A673 (cell line): ENCODE measurements at regions of chr16 and their contacts with region 1.

Region 1: GRCh38 chr16:14278749-14279148 is 207.6 kb downstream of the MRTFB start:
- DNase-seq: no peak
- H3K4me3 ChIP-seq: no peak overlapping the region
- H3K27ac ChIP-seq: no peak overlapping the region
- H3K4me1 ChIP-seq: peaks cover 10% of the 10 kb centered on the region
- H3K27me3 ChIP-seq: no peaks in the 10 kb centered on the region
- CTCF ChIP-seq: no peak

Region 2: GRCh38 chr16:14329727-14330350 is 51.1 kb after region 1 on chr16:
- CTCF ChIA-PET with region 1: no interaction called
- POLR2A ChIA-PET with region 1: interaction called, 11 read pairs
- intact Hi-C with region 1: no loop called
- DNase-seq: no peak
- H3K4me3 ChIP-seq: no peak overlapping the region
- H3K27ac ChIP-seq: no peak overlapping the region
- H3K4me1 ChIP-seq: peaks cover 20% of the 10 kb centered on the region
- H3K27me3 ChIP-seq: no peaks in the 10 kb centered on the region
- CTCF ChIP-seq: no peak

Region 3: GRCh38 chr16:14389359-14389758 is 110.6 kb after region 1 on chr16:
- CTCF ChIA-PET with region 1: no interaction called
- POLR2A ChIA-PET with region 1: no interaction called
- intact Hi-C with region 1: no loop called
- DNase-seq: no peak
- H3K4me3 ChIP-seq: no peak overlapping the region
- H3K27ac ChIP-seq: no peak overlapping the region
- H3K4me1 ChIP-seq: no peaks in the 10 kb centered on the region
- H3K27me3 ChIP-seq: no peaks in the 10 kb centered on the region
- CTCF ChIP-seq: no peak